ENCODE measurements at regions of chr17 and their contacts with region 1.

Region 1: DNA sequence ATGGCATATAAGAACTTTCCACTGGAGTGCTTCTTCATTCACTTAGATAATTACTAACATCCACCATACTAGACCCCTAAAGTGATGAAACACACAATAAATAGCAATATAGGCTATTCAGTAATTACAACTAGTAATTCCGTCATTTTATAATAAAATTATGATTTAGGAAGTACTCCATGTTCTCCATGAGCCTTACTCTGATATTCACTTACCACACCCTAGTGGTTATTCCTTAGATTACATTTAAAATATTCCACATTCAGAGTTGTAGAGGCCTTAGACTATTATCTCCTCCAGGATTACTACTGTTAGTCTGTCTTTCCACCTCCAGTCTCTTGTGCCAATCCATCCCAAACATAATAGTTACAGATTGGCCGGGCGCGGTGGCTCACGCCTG is 62.4 kb downstream of the STH start:
- DNase-seq: no peak
- H3K4me3 Mint-ChIP-seq: no peak overlapping the region
- H3K27ac Mint-ChIP-seq: no peak overlapping the region
- H3K4me1 Mint-ChIP-seq: peaks cover 32% of the 10 kb centered on the region
- H3K27me3 Mint-ChIP-seq: no peaks in the 10 kb centered on the region

Region 2: DNA sequence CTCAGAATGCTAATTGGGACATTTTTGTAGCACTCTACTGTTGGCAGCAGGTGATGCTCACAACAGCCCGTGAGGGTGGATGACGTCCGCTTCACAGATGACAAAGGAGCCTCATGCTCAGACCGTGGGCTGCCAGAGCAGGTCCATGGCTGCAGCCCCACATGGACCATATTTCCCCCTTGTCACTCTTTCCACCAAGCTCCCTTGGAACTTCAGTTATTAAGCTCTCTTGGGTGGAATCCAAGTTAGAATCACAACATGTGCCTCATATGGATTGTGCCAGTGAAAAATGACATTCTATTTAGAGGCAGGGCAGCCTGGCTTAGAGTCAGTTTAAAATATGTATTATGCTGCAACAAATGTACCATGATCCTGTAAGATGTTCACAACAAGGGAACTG is 95.6 kb before region 1 on chr17:
- CTCF ChIA-PET with region 1: no interaction called
- POLR2A ChIA-PET with region 1: no interaction called
- intact Hi-C with region 1: no loop called
- DNase-seq: no peak
- H3K4me3 Mint-ChIP-seq: no peak overlapping the region
- H3K27ac Mint-ChIP-seq: no peak overlapping the region
- H3K4me1 Mint-ChIP-seq: no peaks in the 10 kb centered on the region
- H3K27me3 Mint-ChIP-seq: peaks cover 12% of the 10 kb centered on the region

Region 3: GRCh38 chr17:46002311-46002972 is 59.0 kb before region 1 on chr17:
- CTCF ChIA-PET with region 1: interaction called, 3 read pairs
- POLR2A ChIA-PET with region 1: no interaction called
- intact Hi-C with region 1: loop called (anchors 1 kb)
- DNase-seq: peak; percentile 82
- H3K4me3 Mint-ChIP-seq: no peak overlapping the region
- H3K27ac Mint-ChIP-seq: no peak overlapping the region
- H3K4me1 Mint-ChIP-seq: no peaks in the 10 kb centered on the region
- H3K27me3 Mint-ChIP-seq: no peaks in the 10 kb centered on the region

Region 4: GRCh38 chr17:46020023-46020761 is 41.2 kb before region 1 on chr17:
- CTCF ChIA-PET with region 1: no interaction called
- POLR2A ChIA-PET with region 1: no interaction called
- intact Hi-C with region 1: loop called (anchors 5 kb)
- DNase-seq: peak; percentile 72
- H3K4me3 Mint-ChIP-seq: peak overlapping the region; percentile 13
- H3K27ac Mint-ChIP-seq: peak overlapping the region; percentile 76
- H3K4me1 Mint-ChIP-seq: peaks cover 24% of the 10 kb centered on the region
- H3K27me3 Mint-ChIP-seq: no peaks in the 10 kb centered on the region

Region 5: GRCh38 chr17:46108550-46109110 is 47.2 kb after region 1 on chr17:
- CTCF ChIA-PET with region 1: no interaction called
- POLR2A ChIA-PET with region 1: no interaction called
- intact Hi-C with region 1: no loop called
- DNase-seq: no peak
- H3K4me3 Mint-ChIP-seq: no peak overlapping the region
- H3K27ac Mint-ChIP-seq: no peak overlapping the region
- H3K4me1 Mint-ChIP-seq: peaks cover 71% of the 10 kb centered on the region
- H3K27me3 Mint-ChIP-seq: no peaks in the 10 kb centered on the region